CD4-positive, alpha-beta memory T cell (primary cell): ENCODE measurements at regions of chr6 and their contacts with region 1.

Region 1: DNA sequence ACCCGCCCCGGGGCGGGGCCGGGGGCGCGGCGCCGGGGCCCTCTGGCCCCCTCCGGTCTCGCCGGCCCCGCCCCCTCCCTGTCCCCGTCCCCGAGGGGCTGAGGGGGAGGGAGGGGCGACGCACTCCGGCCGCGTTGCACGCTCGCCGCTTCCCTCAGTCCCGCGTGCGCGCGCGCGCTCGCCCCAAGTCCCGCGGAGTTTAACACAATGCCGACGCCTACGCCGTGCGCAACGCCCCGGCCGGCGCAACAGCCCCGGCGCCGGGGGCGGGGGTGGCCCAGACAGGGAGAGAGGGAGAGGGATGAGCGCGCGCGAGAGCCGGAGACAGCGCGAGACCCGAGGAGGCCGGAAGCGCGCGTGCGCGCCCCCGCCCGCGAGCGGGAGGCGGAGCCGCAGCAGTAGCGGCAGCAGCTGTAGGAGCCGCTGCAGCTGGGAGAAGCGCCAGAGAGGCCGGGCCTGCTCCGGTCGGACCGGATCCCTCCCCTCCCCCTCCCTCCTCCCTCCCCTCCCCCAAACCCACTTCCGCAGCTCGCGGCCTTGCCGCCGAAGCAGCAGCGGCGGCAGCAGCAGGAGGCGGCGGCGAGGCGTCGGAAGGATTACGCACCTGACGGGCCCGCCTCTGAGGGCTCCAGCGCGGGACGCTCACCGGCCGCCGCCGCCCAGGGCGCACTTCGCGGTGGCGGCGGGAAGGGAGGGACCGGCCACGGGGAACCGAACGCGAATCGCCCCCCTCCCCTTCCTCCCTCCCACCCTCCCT is 905 bp downstream of the ZBTB2 start:
- DNase-seq: peak; percentile 98 to 99 (median 99)
- H3K4me3 ChIP-seq: peak overlapping the region in 1 of 2 donors; percentile 86
- H3K4me3 Mint-ChIP-seq: peak overlapping the region; percentile 29 to 98 (median 74)
- H3K27ac ChIP-seq: peak overlapping the region; percentile 83
- H3K27ac Mint-ChIP-seq: peak overlapping the region; percentile 74 to 99 (median 82)
- H3K4me1 ChIP-seq: peaks cover 71% of the 10 kb centered on the region
- H3K4me1 Mint-ChIP-seq: peaks cover 39 to 76% (median 55%) of the 10 kb centered on the region in 4 donors
- H3K27me3 ChIP-seq: no peaks in the 10 kb centered on the region
- H3K27me3 Mint-ChIP-seq: peaks cover 0 to 2% of the 10 kb centered on the region in 2 donors

Region 2: DNA sequence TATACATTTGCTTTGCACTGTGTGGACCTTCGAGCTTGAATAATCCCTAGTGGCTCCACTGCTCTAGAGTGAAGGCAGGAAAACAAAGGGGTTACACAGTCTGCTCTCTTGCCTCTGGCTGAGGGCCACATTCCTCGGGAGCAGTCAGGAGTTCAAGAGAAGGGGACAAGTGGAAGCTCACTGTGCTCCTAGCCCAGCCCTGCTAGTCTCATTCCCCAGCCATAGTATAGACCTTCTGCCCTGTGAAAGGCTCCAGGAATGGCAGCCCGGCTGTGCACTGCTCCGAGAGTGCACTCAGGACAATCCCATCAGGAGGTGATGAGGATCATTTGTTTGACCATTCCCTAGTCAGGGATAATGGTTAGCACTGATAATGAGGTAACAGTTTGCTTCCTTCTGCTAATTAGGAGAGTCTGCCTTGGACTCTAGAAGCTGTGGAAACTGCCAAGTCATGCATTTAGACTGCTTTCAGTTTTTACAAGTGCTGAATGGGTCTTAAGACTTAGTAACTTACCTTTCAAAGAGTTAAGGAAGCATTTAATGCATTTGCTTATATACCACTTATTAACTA is 1013.2 kb before region 1 on chr6:
- CTCF ChIA-PET with region 1: no interaction called
- POLR2A ChIA-PET with region 1: no interaction called
- intact Hi-C with region 1: no loop called
- DNase-seq: no peak
- H3K4me3 ChIP-seq: no peak overlapping the region
- H3K4me3 Mint-ChIP-seq: no peak overlapping the region
- H3K27ac ChIP-seq: no peak overlapping the region
- H3K27ac Mint-ChIP-seq: no peak overlapping the region
- H3K4me1 ChIP-seq: no peaks in the 10 kb centered on the region
- H3K4me1 Mint-ChIP-seq: no peaks in the 10 kb centered on the region
- H3K27me3 ChIP-seq: no peaks in the 10 kb centered on the region
- H3K27me3 Mint-ChIP-seq: peaks cover 12 to 18% of the 10 kb centered on the region in 2 donors

Region 3: DNA sequence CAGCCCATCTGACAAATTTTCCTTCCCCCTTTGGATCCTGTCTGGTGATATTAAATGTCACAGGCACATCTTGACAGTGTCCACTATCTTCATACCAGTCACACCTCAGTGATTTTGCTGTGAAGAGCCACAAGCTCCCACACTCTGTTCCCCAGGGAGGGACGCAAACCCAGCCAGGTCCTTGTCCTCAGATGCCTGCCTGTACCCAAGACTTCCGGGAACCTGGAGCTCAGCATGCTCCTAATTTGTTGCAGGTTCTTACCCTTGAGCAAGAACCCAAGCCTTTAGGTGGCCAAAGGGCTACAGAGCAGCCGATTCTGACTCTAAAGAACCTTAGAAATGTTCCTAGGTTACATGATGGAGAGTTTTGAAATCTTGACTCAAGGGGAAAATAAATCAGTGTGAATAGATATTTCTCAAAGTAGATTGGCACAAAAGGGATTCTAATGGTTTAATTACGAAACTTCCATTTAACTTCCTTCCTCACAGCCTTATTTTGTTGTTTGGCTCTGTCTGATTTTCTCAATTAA is 591.1 kb before region 1 on chr6:
- CTCF ChIA-PET with region 1: no interaction called
- POLR2A ChIA-PET with region 1: no interaction called
- intact Hi-C with region 1: no loop called
- DNase-seq: no peak
- H3K4me3 ChIP-seq: no peak overlapping the region
- H3K4me3 Mint-ChIP-seq: no peak overlapping the region
- H3K27ac ChIP-seq: no peak overlapping the region
- H3K27ac Mint-ChIP-seq: no peak overlapping the region
- H3K4me1 ChIP-seq: no peaks in the 10 kb centered on the region
- H3K4me1 Mint-ChIP-seq: no peaks in the 10 kb centered on the region
- H3K27me3 ChIP-seq: no peaks in the 10 kb centered on the region
- H3K27me3 Mint-ChIP-seq: no peaks in the 10 kb centered on the region

Region 4: GRCh38 chr6:151323791-151324487 is 66.5 kb before region 1 on chr6:
- CTCF ChIA-PET with region 1: interaction called, 4 read pairs
- POLR2A ChIA-PET with region 1: interaction called, 17 read pairs
- intact Hi-C with region 1: no loop called
- DNase-seq: peak; percentile 45 to 69 (median 66)
- H3K4me3 ChIP-seq: no peak overlapping the region
- H3K4me3 Mint-ChIP-seq: peak overlapping the region in 7 of 8 donors; percentile 59 to 87 (median 71)
- H3K27ac ChIP-seq: no peak overlapping the region
- H3K27ac Mint-ChIP-seq: peak overlapping the region in 1 of 7 donors; percentile 67
- H3K4me1 ChIP-seq: peaks cover 16% of the 10 kb centered on the region
- H3K4me1 Mint-ChIP-seq: peaks cover 11 to 25% (median 21%) of the 10 kb centered on the region in 4 donors
- H3K27me3 ChIP-seq: peaks cover 7% of the 10 kb centered on the region
- H3K27me3 Mint-ChIP-seq: peaks cover 25 to 46% of the 10 kb centered on the region in 2 donors

Region 5: GRCh38 chr6:151374036-151374683 is 16.3 kb before region 1 on chr6:
- CTCF ChIA-PET with region 1: interaction called, 11 read pairs
- POLR2A ChIA-PET with region 1: interaction called, 172 read pairs
- intact Hi-C with region 1: loop called (anchors 2 kb)
- DNase-seq: peak in 1 of 5 donors; percentile 48
- H3K4me3 ChIP-seq: no peak overlapping the region
- H3K4me3 Mint-ChIP-seq: peak overlapping the region; percentile 64 to 83 (median 76)
- H3K27ac ChIP-seq: peak overlapping the region; percentile 60
- H3K27ac Mint-ChIP-seq: peak overlapping the region; percentile 83 to 96 (median 89)
- H3K4me1 ChIP-seq: peaks cover 73% of the 10 kb centered on the region
- H3K4me1 Mint-ChIP-seq: peaks cover 58 to 80% (median 66%) of the 10 kb centered on the region in 4 donors
- H3K27me3 ChIP-seq: no peaks in the 10 kb centered on the region
- H3K27me3 Mint-ChIP-seq: no peaks in the 10 kb centered on the region

Region 6: GRCh38 chr6:151409260-151409659 is 18.8 kb after region 1 on chr6:
- CTCF ChIA-PET with region 1: interaction called, 55 read pairs
- POLR2A ChIA-PET with region 1: interaction called, 46 read pairs
- intact Hi-C with region 1: loop called (anchors 1 kb)
- DNase-seq: no peak
- H3K4me3 ChIP-seq: no peak overlapping the region
- H3K4me3 Mint-ChIP-seq: no peak overlapping the region
- H3K27ac ChIP-seq: no peak overlapping the region
- H3K27ac Mint-ChIP-seq: peak overlapping the region in 5 of 7 donors; percentile 3 to 79 (median 60)
- H3K4me1 ChIP-seq: peaks cover 16% of the 10 kb centered on the region
- H3K4me1 Mint-ChIP-seq: peaks cover 22 to 33% (median 29%) of the 10 kb centered on the region in 4 donors
- H3K27me3 ChIP-seq: no peaks in the 10 kb centered on the region
- H3K27me3 Mint-ChIP-seq: no peaks in the 10 kb centered on the region

Region 7: GRCh38 chr6:151482290-151482689 is 91.8 kb after region 1 on chr6:
- CTCF ChIA-PET with region 1: no interaction called
- POLR2A ChIA-PET with region 1: interaction called, 15 read pairs
- intact Hi-C with region 1: no loop called
- DNase-seq: peak; percentile 11 to 53 (median 23)
- H3K4me3 ChIP-seq: peak overlapping the region in 1 of 2 donors; percentile 8
- H3K4me3 Mint-ChIP-seq: peak overlapping the region; percentile 80 to 94 (median 90)
- H3K27ac ChIP-seq: peak overlapping the region; percentile 46
- H3K27ac Mint-ChIP-seq: peak overlapping the region; percentile 75 to 99 (median 97)
- H3K4me1 ChIP-seq: peaks cover 23% of the 10 kb centered on the region
- H3K4me1 Mint-ChIP-seq: peaks cover 19 to 22% (median 21%) of the 10 kb centered on the region in 4 donors
- H3K27me3 ChIP-seq: no peaks in the 10 kb centered on the region
- H3K27me3 Mint-ChIP-seq: peaks cover 0 to 2% of the 10 kb centered on the region in 2 donors

Region 8: DNA sequence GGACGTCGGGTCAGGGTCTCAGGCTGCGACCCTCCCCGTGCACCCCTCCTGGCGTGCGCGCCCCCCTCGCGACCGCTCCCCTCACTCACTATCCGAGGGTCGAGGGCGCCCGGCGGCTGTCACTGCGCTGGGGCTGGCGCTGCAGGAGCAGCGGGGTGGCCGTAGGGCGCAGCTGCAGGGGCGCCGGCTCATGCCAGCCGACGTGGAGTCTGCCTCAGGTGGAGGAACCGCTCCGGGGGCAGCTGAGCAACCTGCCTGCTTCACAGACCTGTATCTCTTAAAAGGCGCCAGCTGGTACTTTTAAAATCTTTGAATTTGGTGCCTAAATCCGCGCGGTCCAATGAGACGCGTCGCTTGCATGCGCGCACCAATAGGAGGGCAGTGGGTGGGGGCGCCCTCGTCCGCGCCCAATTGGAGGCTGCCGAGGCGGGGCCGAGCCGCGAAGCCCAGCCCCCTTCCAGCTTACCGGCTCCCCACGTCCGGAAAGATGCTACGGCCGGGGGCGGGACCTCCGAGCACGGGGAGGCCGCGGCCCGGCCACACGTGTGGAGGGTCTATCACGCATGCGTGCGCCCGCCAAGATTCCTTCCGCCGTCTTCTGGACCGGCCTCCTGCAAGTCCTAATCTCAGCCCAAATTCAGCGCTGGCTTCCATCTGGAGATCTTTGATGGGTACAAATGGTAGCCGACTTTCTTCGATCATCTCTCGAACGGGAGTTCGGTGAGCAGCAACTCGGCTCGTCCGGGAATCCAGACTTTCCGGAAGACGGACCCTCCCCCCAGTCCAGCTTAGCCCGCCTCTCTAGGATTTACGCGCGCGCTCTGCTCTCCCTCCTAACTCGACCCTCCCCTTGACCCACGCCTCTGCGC is 1592.5 kb after region 1 on chr6 and contains the start of gene FBXO5:
- CTCF ChIA-PET with region 1: no interaction called
- POLR2A ChIA-PET with region 1: no interaction called
- intact Hi-C with region 1: loop called (anchors 2 kb)
- DNase-seq: peak; percentile 96 to 98 (median 97)
- H3K4me3 ChIP-seq: peak within 1 kb of the TSS; percentile 64 to 82
- H3K4me3 Mint-ChIP-seq: peak within 1 kb of the TSS; percentile 96 to 99 (median 98)
- H3K27ac ChIP-seq: peak within 1 kb of the TSS; percentile 87
- H3K27ac Mint-ChIP-seq: peak within 1 kb of the TSS; percentile 97 to 99 (median 99)
- H3K4me1 ChIP-seq: peaks cover 43% of the 10 kb centered on the region
- H3K4me1 Mint-ChIP-seq: peaks cover 34 to 66% (median 45%) of the 10 kb centered on the region in 4 donors
- H3K27me3 ChIP-seq: no peaks in the 10 kb centered on the region
- H3K27me3 Mint-ChIP-seq: no peaks in the 10 kb centered on the region
- total RNA-seq, gene FBXO5: 9.9 to 10.4 TPM